ENCODE measurements at regions of chr3 and their contacts with region 1.

Region 1: GRCh38 chr3:142595951-142596725 is at the start of gene PLS1:
- DNase-seq: peak; percentile 78 to 88
- H3K4me3 ChIP-seq: peak within 1 kb of the TSS; percentile 61 to 70
- H3K27ac ChIP-seq: peak within 1 kb of the TSS in 1 of 2 donors; percentile 52
- H3K4me1 ChIP-seq: no peaks in the 10 kb centered on the region
- H3K27me3 ChIP-seq: no peaks in the 10 kb centered on the region
- CTCF ChIP-seq: peak in 3 of 4 experiments; percentile 9 to 13 (median 10)
- POLR2A ChIP-seq: peak; percentile 35 to 64
- total RNA-seq, gene PLS1: 0.26 to 4.5 (median 1.8) TPM

Region 2: DNA sequence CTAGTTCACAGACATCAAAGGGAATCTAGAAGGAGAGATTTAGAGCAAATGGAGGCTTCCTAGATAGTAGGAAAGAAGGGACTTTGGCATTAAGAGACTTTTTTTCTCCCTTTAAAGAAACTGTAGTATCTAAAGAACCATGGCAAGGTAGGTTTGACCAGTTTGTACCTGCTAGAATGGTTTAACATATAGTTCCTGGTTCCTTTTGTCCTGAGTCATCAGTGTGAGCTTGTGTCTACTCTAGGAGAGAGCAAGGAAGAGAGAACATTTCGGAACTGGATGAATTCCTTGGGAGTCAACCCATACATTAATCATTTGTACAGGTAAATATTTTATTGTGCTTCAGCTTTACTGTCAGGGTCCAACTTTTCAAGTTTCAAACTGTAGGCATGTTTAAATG is 98.1 kb after region 1 on chr3:
- intact Hi-C with region 1: no loop called
- DNase-seq: no peak
- H3K4me3 ChIP-seq: no peak overlapping the region
- H3K27ac ChIP-seq: no peak overlapping the region
- H3K4me1 ChIP-seq: no peaks in the 10 kb centered on the region
- H3K27me3 ChIP-seq: no peaks in the 10 kb centered on the region
- CTCF ChIP-seq: no peak
- POLR2A ChIP-seq: no peak

Region 3: DNA sequence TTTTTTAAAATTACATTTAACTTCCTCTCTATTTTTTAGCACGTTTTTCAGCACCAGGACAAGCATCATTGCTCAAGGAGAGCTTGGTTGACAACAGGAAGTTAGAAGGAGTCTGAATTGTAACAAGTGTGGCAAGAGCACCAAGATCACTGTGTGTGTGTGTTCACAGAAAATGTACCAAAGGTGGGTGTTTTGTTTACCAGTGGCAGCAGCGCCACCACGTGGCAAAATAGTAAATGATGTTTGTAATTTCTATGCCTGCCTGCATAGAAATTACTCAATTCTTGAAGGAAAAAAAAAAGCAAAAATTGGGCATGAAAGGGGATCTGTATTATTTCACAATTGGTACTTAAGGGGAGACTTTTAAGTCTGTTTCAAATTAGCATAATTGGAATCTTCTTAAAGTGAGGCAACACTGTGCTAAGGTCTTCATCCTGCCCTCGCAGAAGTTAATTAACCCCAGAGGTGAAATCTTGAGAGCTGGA is 397.9 kb after region 1 on chr3:
- intact Hi-C with region 1: loop called (anchors 10 kb)
- DNase-seq: peak; percentile 39 to 43
- H3K4me3 ChIP-seq: no peak overlapping the region
- H3K27ac ChIP-seq: no peak overlapping the region
- H3K4me1 ChIP-seq: no peaks in the 10 kb centered on the region
- H3K27me3 ChIP-seq: no peaks in the 10 kb centered on the region
- CTCF ChIP-seq: peak; percentile 45 to 63 (median 52)
- POLR2A ChIP-seq: no peak